PC-9 (cell line): ENCODE measurements at regions of chr3 and their contacts with region 1.

Region 1: DNA sequence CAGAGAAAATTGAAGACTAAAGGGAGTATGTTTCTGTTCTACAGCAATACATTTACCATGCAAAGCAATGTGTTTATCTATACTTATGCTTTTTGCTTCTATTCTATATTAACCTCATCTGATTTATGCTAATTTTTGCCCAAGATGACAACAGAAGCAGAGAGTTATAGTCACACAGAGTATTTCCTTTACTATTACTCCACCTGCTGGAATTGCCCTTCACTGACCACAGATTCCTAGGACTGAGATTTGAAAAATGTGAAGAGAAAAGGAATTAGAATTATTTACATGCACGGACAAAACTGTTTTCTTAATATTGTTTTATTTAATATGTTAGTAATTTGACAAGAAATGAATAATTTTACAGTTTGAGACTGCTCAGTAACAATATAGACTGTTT is 745.6 kb downstream of the VGLL3 start:
- DNase-seq: no peak
- H3K4me3 ChIP-seq: no peak overlapping the region
- H3K27ac ChIP-seq: no peak overlapping the region
- H3K4me1 ChIP-seq: no peaks in the 10 kb centered on the region
- H3K27me3 ChIP-seq: no peaks in the 10 kb centered on the region
- CTCF ChIP-seq: peak; percentile 49

Region 2: GRCh38 chr3:85821130-85821756 is 424.1 kb before region 1 on chr3:
- CTCF ChIA-PET with region 1: no interaction called
- POLR2A ChIA-PET with region 1: no interaction called
- intact Hi-C with region 1: loop called (anchors 1 kb)
- DNase-seq: peak in 1 of 2 experiments; percentile 32
- H3K4me3 ChIP-seq: no peak overlapping the region
- H3K27ac ChIP-seq: no peak overlapping the region
- H3K4me1 ChIP-seq: no peaks in the 10 kb centered on the region
- H3K27me3 ChIP-seq: no peaks in the 10 kb centered on the region
- CTCF ChIP-seq: peak; percentile 73